ENCODE measurements at regions of chr7 and their contacts with region 1.

Region 1: GRCh38 chr7:107150375-107151073 is 18.3 kb upstream of the HBP1 start:
- DNase-seq: peak; percentile 18 to 67
- ATAC-seq: peak; percentile 52 to 73; a peak in 3 of 6 replicates
- H3K4me3 ChIP-seq: no peak overlapping the region
- H3K27ac ChIP-seq: no peak overlapping the region
- H3K4me1 ChIP-seq: peaks cover 5% of the 10 kb centered on the region; the same call in 1 of the 3 replicates
- CTCF ChIP-seq: peak; percentile 81
- EP300 ChIP-seq: no peak
- POLR2A ChIP-seq: no peak
- RAD21 ChIP-seq: peak; percentile 69 to 81

Region 2: DNA sequence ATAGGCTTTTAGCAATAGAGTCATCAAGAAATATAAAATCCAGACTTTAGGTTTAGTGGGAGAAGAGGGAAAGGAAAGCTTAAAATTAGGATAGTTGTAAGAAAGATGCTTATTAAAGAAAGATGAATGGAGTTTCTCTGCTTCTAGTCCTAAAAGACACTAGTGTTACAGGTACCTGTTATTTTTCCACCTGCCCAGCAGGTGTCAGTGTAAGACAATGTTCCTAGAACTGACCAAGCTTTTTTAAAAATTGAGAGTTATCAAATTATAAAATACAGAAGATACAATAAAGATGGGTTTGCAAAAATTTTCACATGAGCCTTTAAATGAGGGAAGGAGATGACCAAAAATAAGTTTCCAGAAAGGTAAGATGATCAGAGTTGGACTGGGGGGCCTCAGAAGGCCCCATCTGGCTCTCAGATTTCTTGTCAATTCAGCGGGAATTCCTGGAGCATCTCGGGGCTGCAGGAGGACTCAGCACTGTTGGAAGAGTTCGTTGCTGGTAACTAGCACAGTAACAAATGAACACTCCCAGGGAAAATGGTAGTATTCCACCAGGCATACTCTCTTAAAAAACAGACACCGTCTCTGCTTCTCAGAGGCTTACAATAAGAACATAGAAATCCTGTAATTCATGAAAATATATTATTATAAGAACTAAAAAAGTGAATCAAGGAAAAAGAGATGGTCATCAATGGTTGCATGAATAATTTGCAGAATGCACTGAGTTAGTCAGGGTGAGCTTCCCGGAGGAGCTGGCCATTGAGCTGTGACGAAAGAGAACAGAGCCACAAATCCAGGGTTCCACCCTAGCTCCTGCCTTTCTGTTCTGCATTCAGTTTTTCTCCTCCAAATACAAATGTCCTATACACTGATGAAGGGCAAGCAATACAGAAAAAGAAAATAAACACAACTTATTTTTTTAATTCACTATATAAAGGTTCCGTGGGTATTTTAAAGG is 357.2 kb before region 1 on chr7:
- CTCF ChIA-PET with region 1: interaction called, 81 read pairs
- POLR2A ChIA-PET with region 1: interaction called, 3 read pairs
- DNase-seq: peak; percentile 25 to 38
- ATAC-seq: peak in 1 of 2 experiments; percentile 39; a peak in 1 of 6 replicates
- H3K4me3 ChIP-seq: no peak overlapping the region
- H3K27ac ChIP-seq: no peak overlapping the region
- H3K4me1 ChIP-seq: no peaks in the 10 kb centered on the region
- CTCF ChIP-seq: peak; percentile 89
- EP300 ChIP-seq: no peak
- POLR2A ChIP-seq: no peak
- RAD21 ChIP-seq: peak; percentile 85 to 89

Region 3: GRCh38 chr7:106947244-106947728 is 203.2 kb before region 1 on chr7:
- CTCF ChIA-PET with region 1: interaction called, 163 read pairs
- POLR2A ChIA-PET with region 1: no interaction called
- DNase-seq: peak; percentile 56 to 73
- ATAC-seq: peak; percentile 89 to 94
- H3K4me3 ChIP-seq: no peak overlapping the region
- H3K27ac ChIP-seq: no peak overlapping the region
- H3K4me1 ChIP-seq: no peaks in the 10 kb centered on the region
- CTCF ChIP-seq: peak; percentile 56
- EP300 ChIP-seq: no peak
- POLR2A ChIP-seq: no peak
- RAD21 ChIP-seq: peak; percentile 72 to 76

Region 4: DNA sequence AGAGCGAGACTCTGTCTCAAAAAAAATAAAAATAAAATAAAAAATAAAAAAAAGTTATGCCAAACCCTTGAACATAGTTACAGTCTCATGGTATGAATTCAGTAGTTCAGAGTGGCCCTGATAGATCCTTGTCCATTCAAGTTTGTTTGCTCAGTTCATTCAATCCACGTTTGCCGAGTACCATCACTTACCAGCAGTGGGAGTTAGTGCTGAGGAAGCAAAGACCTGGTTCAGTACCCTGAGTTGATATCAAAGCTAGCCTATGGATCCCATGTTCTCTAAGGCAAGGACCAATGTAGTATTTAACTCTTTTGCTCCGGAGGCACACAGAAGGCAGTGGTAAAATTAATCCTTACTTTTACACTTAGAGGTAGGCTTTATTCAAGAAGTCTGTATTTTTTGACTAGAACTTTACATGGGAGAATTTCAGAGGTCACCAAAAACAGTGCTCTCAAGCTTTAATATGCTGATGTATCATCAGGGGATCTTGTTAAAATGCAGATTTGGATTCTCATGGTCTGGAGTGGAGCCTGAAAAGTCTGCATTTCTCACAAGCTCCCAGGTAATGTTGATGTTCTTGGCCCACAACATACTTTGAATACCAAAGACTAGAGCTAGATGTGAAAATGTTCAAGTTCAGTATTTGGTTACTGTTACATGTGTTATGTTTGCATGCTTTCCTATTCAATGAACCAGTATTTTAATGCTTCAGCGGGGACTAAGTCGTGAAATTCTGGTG is 19.9 kb before region 1 on chr7:
- CTCF ChIA-PET with region 1: interaction called, 34 read pairs
- POLR2A ChIA-PET with region 1: no interaction called
- DNase-seq: peak; percentile 9 to 30
- ATAC-seq: peak; percentile 50 to 70; a peak in 3 of 6 replicates
- H3K4me3 ChIP-seq: no peak overlapping the region
- H3K27ac ChIP-seq: no peak overlapping the region
- H3K4me1 ChIP-seq: no peaks in the 10 kb centered on the region
- CTCF ChIP-seq: no peak
- EP300 ChIP-seq: no peak
- POLR2A ChIP-seq: no peak
- RAD21 ChIP-seq: no peak

Region 5: DNA sequence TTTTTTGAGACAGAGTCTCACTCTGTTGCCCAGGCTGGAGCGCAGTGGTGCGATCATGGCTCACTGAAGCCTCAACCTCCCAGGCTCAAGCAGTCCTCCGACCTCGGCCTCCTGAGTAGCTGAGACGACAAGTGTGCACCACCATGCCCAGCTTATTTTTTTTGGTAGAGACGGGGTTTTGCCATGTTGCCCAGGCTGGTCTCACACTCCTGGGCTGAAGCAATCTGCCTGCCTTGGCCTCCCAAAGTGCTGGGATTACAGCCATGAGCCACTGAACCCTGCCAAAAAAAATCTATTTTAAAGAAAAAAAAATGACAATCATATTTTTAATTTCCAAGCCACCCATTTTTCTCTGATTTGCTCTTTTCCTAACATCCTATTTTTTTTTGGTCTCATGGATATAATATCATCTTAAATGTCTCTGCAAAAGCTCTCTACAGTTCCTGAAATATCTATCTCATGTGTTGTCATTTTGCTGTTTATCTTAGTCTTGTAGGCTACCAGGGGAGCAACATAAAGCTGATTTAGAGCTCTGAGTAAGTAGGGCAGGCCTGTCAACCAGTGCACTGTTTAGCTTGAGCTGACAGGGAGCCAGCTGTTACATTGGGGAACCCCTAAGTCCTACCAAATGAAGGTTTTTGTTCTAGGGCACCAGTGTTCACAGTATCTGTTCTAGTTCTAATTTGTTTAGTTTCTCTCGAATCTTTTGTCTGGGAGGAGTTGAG is 11.7 kb before region 1 on chr7:
- CTCF ChIA-PET with region 1: interaction called, 34 read pairs
- POLR2A ChIA-PET with region 1: no interaction called
- DNase-seq: no peak
- ATAC-seq: no peak
- H3K4me3 ChIP-seq: no peak overlapping the region
- H3K27ac ChIP-seq: no peak overlapping the region
- H3K4me1 ChIP-seq: no peaks in the 10 kb centered on the region
- CTCF ChIP-seq: no peak
- EP300 ChIP-seq: no peak
- POLR2A ChIP-seq: no peak
- RAD21 ChIP-seq: no peak

Region 6: GRCh38 chr7:107162466-107162865 is 11.9 kb after region 1 on chr7:
- CTCF ChIA-PET with region 1: interaction called, 18 read pairs
- POLR2A ChIA-PET with region 1: interaction called, 10 read pairs
- DNase-seq: no peak
- ATAC-seq: no peak
- H3K4me3 ChIP-seq: no peak overlapping the region
- H3K27ac ChIP-seq: no peak overlapping the region
- H3K4me1 ChIP-seq: 0 out of 3 replicates have a peak, but pooled peaks cover 5% of the 10 kb centered on the region
- CTCF ChIP-seq: no peak
- EP300 ChIP-seq: no peak
- POLR2A ChIP-seq: no peak
- RAD21 ChIP-seq: no peak

Region 7: DNA sequence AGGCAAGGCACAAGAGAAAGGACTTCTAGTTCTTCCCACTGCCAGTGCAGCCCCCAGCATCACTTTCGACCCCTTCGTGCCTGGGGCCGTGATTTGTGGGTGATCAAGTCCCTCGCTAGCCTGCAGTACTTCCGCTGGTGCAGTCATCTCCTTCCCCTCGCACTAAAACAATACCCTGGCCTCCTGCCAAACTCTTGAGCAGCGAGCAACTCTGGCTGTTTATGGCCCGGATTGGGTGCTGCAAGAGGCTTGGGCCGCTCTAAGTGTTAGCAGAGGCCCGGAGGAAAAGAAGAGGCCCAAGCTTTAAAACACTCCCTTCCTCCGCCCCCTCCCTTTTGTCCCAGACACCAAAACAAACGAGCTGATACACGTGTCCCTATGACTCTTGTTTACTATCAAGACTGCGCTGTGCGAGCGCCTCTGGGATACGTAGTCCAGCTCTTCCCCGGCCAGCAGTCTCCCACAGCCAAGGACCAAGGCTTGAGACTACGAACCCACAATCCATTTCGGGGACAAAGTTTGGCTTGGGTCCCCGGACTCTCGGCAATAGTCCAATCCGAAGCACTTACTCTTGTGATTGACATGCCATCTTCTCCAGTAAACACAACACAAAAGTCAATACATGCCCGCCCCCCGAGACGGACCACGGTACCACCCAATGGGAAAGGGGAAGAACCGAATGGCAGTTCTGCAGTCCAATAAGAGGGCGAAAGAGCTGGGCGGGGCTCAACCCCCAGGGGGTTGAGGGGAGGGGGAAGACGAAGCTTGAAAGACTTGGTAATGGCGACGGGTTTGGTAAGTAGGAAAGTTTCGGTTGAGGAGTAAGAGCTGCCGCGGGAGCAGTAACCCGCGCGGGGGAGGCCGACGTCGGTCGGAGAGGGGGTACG is 18.0 kb after region 1 on chr7 and contains the start of gene HBP1:
- CTCF ChIA-PET with region 1: interaction called, 11 read pairs
- POLR2A ChIA-PET with region 1: interaction called, 10 read pairs
- DNase-seq: peak; percentile 97 to 100
- ATAC-seq: peak; percentile 86 to 95
- H3K4me3 ChIP-seq: peak within 1 kb of the TSS; percentile 72
- H3K27ac ChIP-seq: peak within 1 kb of the TSS; percentile 85 to 92
- H3K4me1 ChIP-seq: peaks cover 21% of the 10 kb centered on the region; the same call in 2 of the 3 replicates
- CTCF ChIP-seq: no peak
- EP300 ChIP-seq: no peak
- POLR2A ChIP-seq: no peak
- RAD21 ChIP-seq: no peak
- polyA plus RNA-seq, gene HBP1: 52.4 and 60.1 TPM in 2 replicates